Activated CD4-positive, alpha-beta T cell treated with anti-CD3 and anti-CD28 coated beads, Interleukin-2, amount 10 ng/mL, durations not matched to agents 24 days and 14 days (primary cell): ENCODE measurements at regions of chr13 and their contacts with region 1.

Region 1: DNA sequence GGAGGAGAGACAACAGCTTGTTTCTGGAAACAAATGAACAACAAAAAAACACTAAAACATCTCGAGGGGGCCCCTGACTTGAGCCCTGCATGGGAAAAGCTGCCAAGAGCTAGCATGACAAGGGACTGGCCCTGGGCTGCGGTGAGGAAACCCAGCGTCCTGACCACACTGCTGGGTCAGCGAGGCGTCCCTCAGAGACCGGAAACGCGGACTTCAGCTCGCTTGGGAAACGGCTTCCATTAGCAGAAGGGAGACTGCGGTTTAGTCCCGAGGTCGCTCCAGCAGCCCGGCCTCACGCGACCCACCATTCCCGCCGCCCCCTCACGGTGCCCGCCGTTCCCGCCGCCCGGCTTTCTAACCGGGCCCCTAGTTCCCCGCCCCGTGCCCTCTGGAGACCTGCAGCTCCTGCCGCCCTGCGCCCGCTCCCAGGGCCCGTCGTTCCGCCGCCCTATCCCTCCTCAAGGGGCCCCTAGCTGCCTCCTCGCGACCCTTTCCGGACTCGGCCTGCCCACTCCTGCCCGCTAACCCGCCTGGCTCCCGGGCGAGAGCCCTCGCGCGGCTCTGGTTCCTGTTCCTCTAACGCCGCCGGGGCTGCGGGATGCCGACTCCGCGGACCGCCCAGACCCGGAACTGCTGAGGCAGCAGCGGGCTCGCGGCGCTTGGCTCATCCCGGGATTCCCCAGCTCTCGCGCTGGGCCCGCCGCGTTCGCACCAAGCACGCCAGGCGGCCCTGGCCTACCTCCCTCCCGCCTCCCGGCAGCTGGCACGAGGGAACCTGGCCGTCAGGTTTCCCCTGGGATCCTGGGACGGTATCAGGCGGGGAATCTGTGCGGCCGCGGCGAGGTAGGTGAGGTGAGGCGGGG is at the start of gene CCDC122:
- DNase-seq: peak; percentile 93
- H3K4me3 Mint-ChIP-seq: peak within 1 kb of the TSS; percentile 89
- H3K27ac Mint-ChIP-seq: peak within 1 kb of the TSS; percentile 90
- H3K4me1 Mint-ChIP-seq: peaks cover 13% of the 10 kb centered on the region
- H3K27me3 Mint-ChIP-seq: peaks cover 17% of the 10 kb centered on the region
- total RNA-seq, gene CCDC122: 0.56 and 1.7 TPM in 2 replicates

Region 2: DNA sequence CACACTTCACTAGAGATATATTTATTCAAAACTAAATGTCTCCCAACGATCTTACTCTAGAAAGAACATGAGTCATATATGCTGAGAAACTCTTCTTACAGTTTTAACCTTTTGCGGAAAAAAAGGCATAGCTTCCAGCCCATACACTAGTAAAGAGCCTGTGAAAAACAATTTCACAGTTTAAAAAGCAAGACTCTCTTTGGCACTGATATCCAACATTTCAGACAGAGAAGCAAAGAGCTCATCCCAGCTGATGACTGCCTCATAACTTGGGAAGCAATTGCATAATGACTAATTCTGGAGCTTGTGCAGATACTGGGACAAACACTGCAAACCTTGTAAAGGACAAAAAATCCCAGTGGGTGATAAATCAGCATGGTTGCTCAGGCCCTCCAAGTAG is 180.4 kb before region 1 on chr13:
- intact Hi-C with region 1: no loop called
- DNase-seq: no peak
- H3K4me3 Mint-ChIP-seq: no peak overlapping the region
- H3K27ac Mint-ChIP-seq: no peak overlapping the region
- H3K4me1 Mint-ChIP-seq: peaks cover 2% of the 10 kb centered on the region
- H3K27me3 Mint-ChIP-seq: peaks cover 6% of the 10 kb centered on the region

Region 3: GRCh38 chr13:43924549-43925245 is 45.6 kb after region 1 on chr13:
- intact Hi-C with region 1: no loop called
- DNase-seq: no peak
- H3K4me3 Mint-ChIP-seq: no peak overlapping the region
- H3K27ac Mint-ChIP-seq: no peak overlapping the region
- H3K4me1 Mint-ChIP-seq: no peaks in the 10 kb centered on the region
- H3K27me3 Mint-ChIP-seq: peaks cover 8% of the 10 kb centered on the region

Region 4: DNA sequence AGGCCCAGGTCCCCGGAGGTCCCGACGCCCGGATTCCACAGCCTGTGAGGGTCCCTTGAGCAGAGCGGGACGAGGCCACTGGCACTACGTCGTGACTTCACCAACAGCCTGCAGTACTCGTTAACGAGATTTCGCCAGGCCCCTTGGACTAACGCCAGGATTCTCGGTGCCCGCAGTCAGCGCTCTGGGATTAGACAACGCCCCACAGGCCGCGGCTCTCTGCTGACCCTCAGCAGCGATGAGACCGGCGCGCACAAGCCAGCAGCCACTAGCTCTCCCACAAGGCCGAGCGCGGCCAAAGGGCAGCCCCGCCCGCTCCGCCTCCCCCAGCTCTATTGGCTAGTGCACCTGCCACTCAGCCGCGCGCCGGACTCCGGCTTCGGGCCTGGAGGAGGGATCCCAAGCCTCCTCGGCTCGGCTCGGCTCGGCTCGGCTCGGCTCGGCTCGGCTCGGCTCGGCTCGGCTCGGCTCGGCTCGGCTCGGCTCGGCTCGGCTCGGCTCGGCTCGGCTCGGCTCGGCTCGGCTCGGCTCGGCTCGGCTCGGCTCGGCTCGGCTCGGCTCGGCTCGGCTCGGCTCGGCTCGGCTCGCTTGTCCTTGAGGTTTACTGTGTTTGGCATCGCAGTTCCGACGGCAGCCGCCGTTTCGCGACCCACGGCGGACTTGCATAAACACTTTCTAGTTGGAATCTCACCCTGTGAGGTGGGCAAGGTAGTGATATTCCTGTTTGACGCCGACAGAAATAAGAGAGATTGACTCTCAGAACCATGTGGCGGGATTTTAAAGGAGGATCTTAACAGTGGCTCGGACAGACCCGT is 262.8 kb after region 1 on chr13:
- intact Hi-C with region 1: loop called (anchors 5 kb)
- DNase-seq: peak; percentile 99
- H3K4me3 Mint-ChIP-seq: peak overlapping the region; percentile 87
- H3K27ac Mint-ChIP-seq: peak overlapping the region; percentile 83
- H3K4me1 Mint-ChIP-seq: peaks cover 16% of the 10 kb centered on the region
- H3K27me3 Mint-ChIP-seq: peaks cover 30% of the 10 kb centered on the region